Sigmoid colon (tissue), 7 donors: ENCODE measurements at regions of chr7 and their contacts with region 1.

Region 1: GRCh38 chr7:137169282-137169698 is 174.2 kb downstream of the PTN start:
- DNase-seq: peak; percentile 87
- H3K4me3 ChIP-seq: no peak overlapping the region
- H3K27ac ChIP-seq: peak overlapping the region in 2 of 4 donors; percentile 37 to 39
- H3K4me1 ChIP-seq: peaks cover 0 to 19% (median 6%) of the 10 kb centered on the region in 4 donors
- H3K27me3 ChIP-seq: no peaks in the 10 kb centered on the region
- CTCF ChIP-seq: peak; percentile 71 to 86 (median 78)
- EP300 ChIP-seq: no peak
- POLR2A ChIP-seq: no peak

Region 2: DNA sequence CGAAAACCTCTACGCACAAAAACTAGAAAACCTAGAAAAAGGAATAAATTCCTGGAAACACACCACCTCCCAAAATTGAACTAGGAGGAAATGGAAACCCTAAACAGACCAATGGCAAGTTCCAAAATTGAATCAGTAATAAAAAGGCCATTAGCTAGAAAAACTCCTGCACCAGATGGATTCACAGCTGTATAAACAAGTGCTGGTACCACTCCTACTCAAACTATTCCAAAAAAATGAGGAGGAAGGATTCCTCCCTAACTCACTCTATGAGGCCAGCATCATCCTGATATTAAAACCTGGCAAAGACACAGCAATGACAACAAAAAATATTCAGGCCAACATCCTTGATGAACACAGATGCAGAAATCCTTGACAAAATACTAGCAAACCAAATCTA is 72.7 kb before region 1 on chr7:
- intact Hi-C with region 1: no loop called
- DNase-seq: no peak
- H3K4me3 ChIP-seq: no peak overlapping the region
- H3K27ac ChIP-seq: no peak overlapping the region
- H3K4me1 ChIP-seq: no peaks in the 10 kb centered on the region
- H3K27me3 ChIP-seq: no peaks in the 10 kb centered on the region
- CTCF ChIP-seq: no peak
- EP300 ChIP-seq: no peak
- POLR2A ChIP-seq: no peak

Region 3: DNA sequence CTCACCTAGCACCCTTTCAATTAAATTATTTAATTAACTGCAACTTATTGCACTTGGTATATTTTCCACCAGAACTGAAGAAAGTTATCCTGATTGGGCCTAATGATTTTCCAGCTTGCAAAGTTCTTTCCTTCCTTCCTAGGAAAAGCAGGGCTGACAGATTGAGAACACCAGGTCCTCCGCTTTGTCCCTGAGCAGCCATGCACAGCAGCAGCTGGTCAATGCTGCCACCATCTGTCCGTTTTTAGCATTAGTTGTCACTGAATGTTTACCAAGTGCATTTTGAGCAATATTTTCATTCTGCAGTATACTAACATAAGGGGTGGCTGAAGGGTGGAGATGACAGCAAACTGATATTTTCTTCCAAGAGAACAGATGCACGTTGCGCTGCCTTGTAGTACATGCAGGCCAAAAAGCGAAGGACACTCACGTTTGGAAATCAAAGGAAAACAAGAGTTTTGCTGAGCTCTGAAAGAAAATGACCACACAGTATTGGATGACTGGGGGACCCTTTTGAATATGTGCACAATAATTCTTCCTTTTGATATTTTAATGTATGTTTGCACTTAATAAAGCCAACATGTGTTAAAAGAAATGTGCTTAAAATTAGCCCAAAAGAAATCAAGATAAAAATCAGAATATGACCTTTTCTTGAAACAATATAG is 423.1 kb after region 1 on chr7:
- intact Hi-C with region 1: loop called (anchors 1 kb)
- DNase-seq: peak; percentile 80
- H3K4me3 ChIP-seq: no peak overlapping the region
- H3K27ac ChIP-seq: peak overlapping the region in 3 of 4 donors; percentile 56 to 63 (median 57)
- H3K4me1 ChIP-seq: peaks cover 0 to 36% (median 32%) of the 10 kb centered on the region in 4 donors
- H3K27me3 ChIP-seq: no peaks in the 10 kb centered on the region
- CTCF ChIP-seq: peak; percentile 64 to 83 (median 72)
- EP300 ChIP-seq: no peak
- POLR2A ChIP-seq: no peak